Ascending aorta (tissue), 2 donors: ENCODE measurements at regions of chr6 and their contacts with region 1.

Region 1: DNA sequence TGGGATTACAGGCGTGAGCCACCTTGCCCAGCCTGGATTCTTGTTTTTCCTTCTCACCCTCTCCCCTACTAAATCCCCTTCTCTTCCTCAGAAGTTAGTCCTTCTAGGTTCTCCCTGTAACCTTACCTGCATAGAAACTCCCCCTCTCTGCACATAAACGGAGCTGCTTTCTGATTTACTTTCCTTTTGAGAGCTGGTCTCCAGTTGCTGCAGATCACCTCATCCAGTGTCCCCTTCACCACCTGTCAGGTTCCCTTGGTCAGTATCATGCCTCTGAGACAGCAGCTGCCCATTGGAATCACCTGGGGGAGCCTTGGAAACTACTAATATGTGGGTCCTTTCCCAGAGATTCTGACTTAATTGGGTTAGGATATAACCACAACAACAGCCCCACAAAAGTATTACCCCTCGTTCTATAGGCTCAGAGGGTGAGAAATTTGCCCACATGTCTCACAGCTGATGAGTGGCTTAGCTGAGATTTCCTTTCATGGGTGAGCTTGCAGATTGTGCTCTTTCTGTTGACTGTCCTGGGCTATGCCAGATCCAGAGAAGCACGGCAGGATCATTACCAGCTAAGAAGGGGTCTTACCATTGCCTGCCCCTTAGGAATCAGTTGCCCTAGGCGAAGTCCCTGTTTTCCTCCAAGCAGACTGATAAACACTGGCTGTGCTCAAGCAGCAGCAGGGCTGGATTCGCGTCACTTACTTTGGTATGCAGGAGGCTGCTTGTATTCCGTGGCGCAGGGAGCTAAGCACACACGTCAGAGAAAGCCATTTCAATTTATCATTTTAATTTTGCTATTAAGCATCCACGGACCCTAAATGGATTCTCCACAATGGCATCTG is 51.3 kb downstream of the AKAP12 start:
- DNase-seq: peak in 1 of 2 donors; percentile 78
- H3K4me3 ChIP-seq: peak overlapping the region in 1 of 2 donors; percentile 24
- H3K27ac ChIP-seq: peak overlapping the region; percentile 3 to 32
- H3K4me1 ChIP-seq: peaks cover 0 to 7% of the 10 kb centered on the region in 2 donors
- H3K27me3 ChIP-seq: no peaks in the 10 kb centered on the region
- CTCF ChIP-seq: no peak

Region 2: DNA sequence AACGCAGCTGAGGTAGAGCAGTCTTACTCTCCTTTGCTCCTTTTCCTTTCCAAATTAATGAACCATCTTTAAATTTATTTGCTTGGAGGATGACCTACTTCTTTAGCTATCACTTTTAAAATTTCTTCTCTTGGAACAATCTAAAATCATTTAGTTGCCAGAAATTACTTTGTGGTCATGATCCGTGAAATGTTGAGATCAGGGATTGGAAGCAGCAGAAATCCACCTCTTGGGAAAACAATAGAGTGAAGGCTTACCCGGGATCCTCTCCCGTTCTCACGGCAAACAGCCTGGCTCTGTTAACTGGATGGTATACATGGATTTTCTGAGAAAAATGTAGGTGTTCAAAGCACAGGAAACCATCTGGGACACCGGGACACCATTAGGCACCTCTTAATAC is 43.6 kb before region 1 on chr6:
- intact Hi-C with region 1: no loop called
- DNase-seq: no peak
- H3K4me3 ChIP-seq: no peak overlapping the region
- H3K27ac ChIP-seq: no peak overlapping the region
- H3K4me1 ChIP-seq: peaks cover 0 to under 1% of the 10 kb centered on the region in 2 donors
- H3K27me3 ChIP-seq: no peaks in the 10 kb centered on the region
- CTCF ChIP-seq: no peak

Region 3: DNA sequence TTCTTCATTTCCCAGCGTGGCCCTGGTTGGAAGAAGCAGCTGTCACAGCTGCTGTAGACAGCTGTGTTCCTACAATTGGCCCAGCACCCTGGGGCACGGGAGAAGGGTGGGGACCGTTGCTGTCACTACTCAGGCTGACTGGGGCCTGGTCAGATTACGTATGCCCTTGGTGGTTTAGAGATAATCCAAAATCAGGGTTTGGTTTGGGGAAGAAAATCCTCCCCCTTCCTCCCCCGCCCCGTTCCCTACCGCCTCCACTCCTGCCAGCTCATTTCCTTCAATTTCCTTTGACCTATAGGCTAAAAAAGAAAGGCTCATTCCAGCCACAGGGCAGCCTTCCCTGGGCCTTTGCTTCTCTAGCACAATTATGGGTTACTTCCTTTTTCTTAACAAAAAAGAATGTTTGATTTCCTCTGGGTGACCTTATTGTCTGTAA is 809.1 kb after region 1 on chr6:
- intact Hi-C with region 1: loop called (anchors 10 kb)
- DNase-seq: peak in 1 of 2 donors; percentile 73
- H3K4me3 ChIP-seq: no peak overlapping the region
- H3K27ac ChIP-seq: peak overlapping the region; percentile 21 to 45
- H3K4me1 ChIP-seq: peaks cover 0 to 8% of the 10 kb centered on the region in 2 donors
- H3K27me3 ChIP-seq: no peaks in the 10 kb centered on the region
- CTCF ChIP-seq: no peak